Gastrocnemius medialis (tissue), 4 donors: ENCODE measurements at regions of chr6 and their contacts with region 1.

Region 1: GRCh38 chr6:105136431-105137350 is 43.1 kb downstream of the POPDC3 start:
- DNase-seq: peak; percentile 70 to 91
- ATAC-seq: peak; percentile 70 to 81
- H3K4me3 ChIP-seq: peak overlapping the region; percentile 81 to 86 (median 84)
- H3K27ac ChIP-seq: peak overlapping the region; percentile 95 to 97 (median 96)
- H3K4me1 ChIP-seq: peaks cover 22 to 33% of the 10 kb centered on the region in 2 donors
- H3K27me3 ChIP-seq: no peaks in the 10 kb centered on the region
- CTCF ChIP-seq: peak in 4 of 5 experiments; percentile 31 to 49 (median 40)
- POLR2A ChIP-seq: peak; percentile 85 to 92

Region 2: DNA sequence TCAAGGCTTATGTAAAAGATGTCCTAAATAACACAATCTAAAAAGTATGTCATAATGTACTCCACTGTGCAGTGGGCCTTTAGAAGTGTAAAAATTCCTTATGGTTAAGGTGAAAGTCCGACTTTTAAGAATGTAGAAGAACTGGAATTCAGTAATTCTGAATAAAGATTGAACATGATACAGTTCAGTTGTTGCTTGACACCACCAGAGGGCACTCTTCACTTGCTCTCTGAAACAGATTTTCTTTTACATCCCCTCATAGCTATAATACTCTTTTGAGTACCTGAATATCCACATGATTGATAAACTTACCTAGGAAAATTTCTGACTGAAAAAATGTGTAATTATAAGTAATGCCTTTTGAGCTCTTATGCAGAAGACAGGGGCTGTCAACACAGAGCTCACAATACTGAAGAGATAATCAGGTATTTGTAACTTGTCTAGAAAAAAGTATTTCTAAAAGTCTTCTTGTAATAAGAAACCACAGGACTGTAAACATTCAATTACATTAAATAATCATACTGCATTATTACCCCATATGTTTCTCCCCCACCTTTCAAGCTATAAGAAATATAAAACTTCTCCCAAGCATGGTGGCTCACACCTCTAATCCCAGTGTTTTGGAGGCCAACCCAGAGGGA is 49.0 kb before region 1 on chr6:
- in situ Hi-C with region 1: no loop called
- intact Hi-C with region 1: loop called (anchors 5 kb)
- DNase-seq: peak in 1 of 2 donors; percentile 21
- ATAC-seq: peak; percentile 71 to 74
- H3K4me3 ChIP-seq: no peak overlapping the region
- H3K27ac ChIP-seq: no peak overlapping the region
- H3K4me1 ChIP-seq: peaks cover 4 to 5% of the 10 kb centered on the region in 2 donors
- H3K27me3 ChIP-seq: no peaks in the 10 kb centered on the region
- CTCF ChIP-seq: peak; percentile 75 to 88 (median 82)
- POLR2A ChIP-seq: no peak

Region 3: GRCh38 chr6:105179244-105180065 is 42.8 kb after region 1 on chr6 and contains the start of gene POPDC3:
- in situ Hi-C with region 1: no loop called
- intact Hi-C with region 1: loop called (anchors 1 kb)
- DNase-seq: peak; percentile 53 to 78
- ATAC-seq: peak; percentile 51 to 63
- H3K4me3 ChIP-seq: peak within 1 kb of the TSS; percentile 69 to 79 (median 77)
- H3K27ac ChIP-seq: peak within 1 kb of the TSS; percentile 96 to 99 (median 99)
- H3K4me1 ChIP-seq: peaks cover 19 to 50% of the 10 kb centered on the region in 2 donors
- H3K27me3 ChIP-seq: no peaks in the 10 kb centered on the region
- CTCF ChIP-seq: peak in 2 of 5 experiments; percentile 9 to 30
- POLR2A ChIP-seq: peak; percentile 28 to 65
- total RNA-seq, gene POPDC3: 105 to 218 (median 179) TPM

Region 4: DNA sequence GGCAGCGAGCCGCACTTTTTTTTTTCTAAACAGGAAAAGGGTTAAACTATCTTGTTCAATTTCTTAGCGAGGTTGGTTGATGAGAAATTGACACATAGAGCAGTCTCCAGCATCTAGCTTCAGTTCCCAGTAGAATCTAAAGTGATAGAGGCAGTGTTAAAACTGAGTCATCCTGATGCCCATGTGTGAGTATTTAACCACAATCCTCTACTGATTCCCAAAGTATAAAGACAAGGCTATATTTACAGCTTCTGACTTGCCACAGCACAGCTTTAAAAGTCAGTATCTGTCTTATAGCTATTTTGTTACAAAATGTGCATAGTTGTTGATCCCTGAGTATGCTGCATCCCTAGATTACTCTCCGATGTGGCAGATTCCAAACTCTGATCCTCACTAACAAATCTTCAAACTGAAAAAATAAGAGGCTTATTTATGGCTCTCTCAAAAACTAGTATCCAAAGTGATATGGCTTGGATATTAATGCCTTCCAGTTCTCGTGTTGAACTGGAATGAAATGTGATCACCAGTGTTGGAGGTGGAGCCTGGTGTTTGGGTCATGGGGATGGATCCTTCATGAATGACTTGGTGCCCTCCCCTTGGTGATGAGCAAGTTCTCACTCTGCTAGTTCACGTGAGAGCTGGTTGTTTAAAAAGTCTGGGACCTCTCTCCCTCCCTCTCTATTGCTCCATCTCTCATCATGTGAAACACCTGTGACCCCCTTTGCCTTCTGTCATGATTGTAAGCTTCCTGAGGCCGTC is 56.2 kb after region 1 on chr6:
- in situ Hi-C with region 1: no loop called
- intact Hi-C with region 1: no loop called
- DNase-seq: peak in 1 of 2 donors; percentile 6
- ATAC-seq: peak; percentile 32 to 64
- H3K4me3 ChIP-seq: no peak overlapping the region
- H3K27ac ChIP-seq: peak overlapping the region; percentile 5 to 70 (median 58)
- H3K4me1 ChIP-seq: peaks cover 8 to 37% of the 10 kb centered on the region in 2 donors
- H3K27me3 ChIP-seq: no peaks in the 10 kb centered on the region
- CTCF ChIP-seq: no peak
- POLR2A ChIP-seq: no peak

Region 5: GRCh38 chr6:105363100-105363754 is 226.5 kb after region 1 on chr6:
- in situ Hi-C with region 1: no loop called
- intact Hi-C with region 1: loop called (anchors 2 kb)
- DNase-seq: peak in 1 of 2 donors; percentile 32
- ATAC-seq: peak; percentile 39 to 62
- H3K4me3 ChIP-seq: no peak overlapping the region
- H3K27ac ChIP-seq: peak overlapping the region; percentile 63 to 74 (median 67)
- H3K4me1 ChIP-seq: peaks cover 27 to 29% of the 10 kb centered on the region in 2 donors
- H3K27me3 ChIP-seq: no peaks in the 10 kb centered on the region
- CTCF ChIP-seq: peak in 4 of 5 experiments; percentile 31 to 37 (median 35)
- POLR2A ChIP-seq: no peak

Region 6: DNA sequence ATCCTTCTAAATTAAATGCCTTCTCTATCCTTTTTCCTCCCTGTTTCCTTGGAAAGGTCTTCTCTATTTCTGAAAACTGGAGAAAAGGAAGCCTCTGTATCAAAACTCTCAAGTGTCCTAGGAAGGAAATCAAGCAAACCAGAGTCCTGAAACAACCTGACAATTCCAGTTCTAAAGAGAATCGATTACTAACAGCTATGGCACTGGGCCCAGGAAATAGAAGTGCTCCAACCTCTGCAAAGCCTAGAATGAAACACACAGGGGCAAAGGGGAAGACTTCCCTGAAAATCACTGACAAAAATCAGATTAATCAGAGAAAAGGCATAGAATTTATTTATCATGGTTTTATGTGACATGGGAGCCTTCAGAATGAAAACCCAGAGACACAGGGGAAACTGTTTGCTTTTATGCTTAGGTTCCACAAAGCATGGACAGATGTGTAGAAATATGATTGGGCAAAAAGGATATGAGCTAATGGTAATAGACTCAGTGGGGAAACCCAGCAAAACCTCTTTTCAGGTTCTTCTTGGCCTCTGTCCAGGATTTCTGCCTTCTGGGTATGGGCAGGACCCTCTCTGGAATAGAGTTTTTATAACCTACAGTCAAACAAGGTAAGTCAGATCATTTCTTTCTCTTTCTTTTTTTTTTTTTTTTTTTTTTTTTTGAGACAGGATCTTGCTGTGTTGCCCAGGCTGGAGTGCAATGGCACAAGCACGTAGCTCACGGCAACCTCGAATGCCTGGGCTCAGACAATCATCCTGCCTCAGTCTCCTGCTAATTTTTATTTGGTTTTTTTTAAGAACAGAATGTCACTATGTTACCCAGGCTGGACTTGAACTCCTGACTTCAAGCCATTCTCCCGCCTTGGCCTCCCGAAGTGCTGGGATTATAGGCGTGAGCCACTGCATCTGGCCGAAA is 1746.2 kb after region 1 on chr6:
- in situ Hi-C with region 1: no loop called
- intact Hi-C with region 1: no loop called
- DNase-seq: no peak
- ATAC-seq: no peak
- H3K4me3 ChIP-seq: no peak overlapping the region
- H3K27ac ChIP-seq: no peak overlapping the region
- H3K4me1 ChIP-seq: no peaks in the 10 kb centered on the region
- H3K27me3 ChIP-seq: no peaks in the 10 kb centered on the region
- CTCF ChIP-seq: no peak
- POLR2A ChIP-seq: no peak

Region 7: GRCh38 chr6:107033126-107033525 is 1896.4 kb after region 1 on chr6:
- in situ Hi-C with region 1: no loop called
- intact Hi-C with region 1: loop called (anchors 10 kb)
- DNase-seq: no peak
- ATAC-seq: no peak
- H3K4me3 ChIP-seq: no peak overlapping the region
- H3K27ac ChIP-seq: no peak overlapping the region
- H3K4me1 ChIP-seq: peaks cover 10 to 21% of the 10 kb centered on the region in 2 donors
- H3K27me3 ChIP-seq: no peaks in the 10 kb centered on the region
- CTCF ChIP-seq: no peak
- POLR2A ChIP-seq: no peak